ENCODE measurements at regions of chr4 and their contacts with region 1.

Region 1: DNA sequence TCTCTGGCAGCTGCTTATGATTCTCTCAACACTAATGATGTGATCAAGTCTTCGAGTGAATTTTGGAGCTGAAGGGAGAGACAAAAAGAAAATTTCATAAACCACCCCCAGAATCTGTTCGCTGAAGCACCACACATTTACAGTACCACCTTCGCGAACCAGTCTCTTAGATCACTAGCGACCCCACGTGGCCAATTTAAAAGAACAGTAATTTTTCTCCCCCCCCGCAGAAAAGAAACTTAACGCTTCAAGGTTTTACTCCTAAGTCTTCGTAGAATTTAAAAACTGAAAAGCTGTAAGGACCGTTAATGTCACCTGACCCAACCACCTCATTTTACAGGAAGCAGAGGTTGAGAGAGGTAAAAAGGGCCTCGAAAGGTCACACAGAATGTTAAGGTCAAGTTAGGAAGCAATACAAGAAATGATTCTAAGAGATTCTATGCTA is 187.5 kb downstream of the QDPR start:
- DNase-seq: peak in 7 of 9 donors; percentile 16 to 43 (median 31)
- ATAC-seq: peak; percentile 56
- H3K4me3 ChIP-seq: no peak overlapping the region
- H3K4me3 Mint-ChIP-seq: peak overlapping the region; percentile 22 to 77 (median 57)
- H3K27ac ChIP-seq: no peak overlapping the region
- H3K27ac Mint-ChIP-seq: peak overlapping the region in 5 of 9 donors; percentile 17 to 67 (median 42)
- H3K4me1 ChIP-seq: peaks cover 0 to 6% of the 10 kb centered on the region in 2 donors
- H3K4me1 Mint-ChIP-seq: peaks cover 8 to 14% (median 10%) of the 10 kb centered on the region in 7 donors
- H3K27me3 ChIP-seq: no peaks in the 10 kb centered on the region
- H3K27me3 Mint-ChIP-seq: peaks cover 0 to 4% (median 0%) of the 10 kb centered on the region in 5 donors

Region 2: GRCh38 chr4:16794816-16795445 is 529.5 kb before region 1 on chr4:
- CTCF ChIA-PET with region 1: no interaction called
- POLR2A ChIA-PET with region 1: no interaction called
- intact Hi-C with region 1: loop called (anchors 2 kb)
- DNase-seq: peak in 5 of 9 donors; percentile 3 to 32 (median 16)
- ATAC-seq: no peak
- H3K4me3 ChIP-seq: no peak overlapping the region
- H3K4me3 Mint-ChIP-seq: no peak overlapping the region
- H3K27ac ChIP-seq: no peak overlapping the region
- H3K27ac Mint-ChIP-seq: no peak overlapping the region
- H3K4me1 ChIP-seq: no peaks in the 10 kb centered on the region
- H3K4me1 Mint-ChIP-seq: peaks cover 0 to 4% (median 0%) of the 10 kb centered on the region in 7 donors
- H3K27me3 ChIP-seq: no peaks in the 10 kb centered on the region
- H3K27me3 Mint-ChIP-seq: peaks cover 0 to 9% (median 5%) of the 10 kb centered on the region in 5 donors

Region 3: DNA sequence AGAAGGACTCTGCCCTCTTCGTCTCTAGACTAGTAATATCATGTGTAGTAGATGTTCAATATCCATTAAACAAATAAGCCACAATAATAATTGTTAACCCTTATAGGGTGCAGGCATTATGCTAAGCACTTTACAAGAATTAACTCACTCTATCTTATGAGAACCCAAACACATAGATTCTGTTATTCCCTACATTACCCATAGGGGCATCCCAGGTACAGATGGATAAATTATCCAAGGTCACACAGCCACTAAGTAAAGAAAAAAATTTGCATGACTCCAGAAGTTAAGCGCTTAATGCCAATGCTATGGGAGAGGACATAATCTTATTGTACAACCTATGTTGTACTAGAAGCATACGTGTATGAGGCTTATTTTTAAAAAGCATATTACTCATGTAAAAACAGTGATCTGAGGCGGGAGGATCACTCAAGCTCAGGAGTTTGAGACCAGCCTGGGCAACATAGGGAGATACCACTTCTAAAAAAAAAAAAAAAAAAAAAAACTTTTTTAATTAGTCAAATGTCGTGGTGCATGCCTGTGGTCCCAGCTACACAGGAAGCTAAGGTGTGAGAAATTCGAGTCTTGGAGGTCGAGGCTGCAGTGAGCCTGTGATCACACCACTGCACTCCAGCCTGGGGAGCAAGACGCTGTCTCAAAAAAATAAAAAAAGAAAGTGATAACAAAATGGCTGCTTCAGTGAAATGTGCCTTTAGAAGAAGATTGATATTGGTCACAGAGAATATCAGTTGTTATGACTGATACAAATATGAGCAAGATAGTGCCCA is 439.5 kb before region 1 on chr4:
- CTCF ChIA-PET with region 1: no interaction called
- POLR2A ChIA-PET with region 1: no interaction called
- intact Hi-C with region 1: no loop called
- DNase-seq: no peak
- ATAC-seq: peak; percentile 51
- H3K4me3 ChIP-seq: no peak overlapping the region
- H3K4me3 Mint-ChIP-seq: no peak overlapping the region
- H3K27ac ChIP-seq: no peak overlapping the region
- H3K27ac Mint-ChIP-seq: no peak overlapping the region
- H3K4me1 ChIP-seq: peaks cover 4 to 16% of the 10 kb centered on the region in 2 donors
- H3K4me1 Mint-ChIP-seq: peaks cover 2 to 24% (median 11%) of the 10 kb centered on the region in 7 donors
- H3K27me3 ChIP-seq: no peaks in the 10 kb centered on the region
- H3K27me3 Mint-ChIP-seq: no peaks in the 10 kb centered on the region

Region 4: DNA sequence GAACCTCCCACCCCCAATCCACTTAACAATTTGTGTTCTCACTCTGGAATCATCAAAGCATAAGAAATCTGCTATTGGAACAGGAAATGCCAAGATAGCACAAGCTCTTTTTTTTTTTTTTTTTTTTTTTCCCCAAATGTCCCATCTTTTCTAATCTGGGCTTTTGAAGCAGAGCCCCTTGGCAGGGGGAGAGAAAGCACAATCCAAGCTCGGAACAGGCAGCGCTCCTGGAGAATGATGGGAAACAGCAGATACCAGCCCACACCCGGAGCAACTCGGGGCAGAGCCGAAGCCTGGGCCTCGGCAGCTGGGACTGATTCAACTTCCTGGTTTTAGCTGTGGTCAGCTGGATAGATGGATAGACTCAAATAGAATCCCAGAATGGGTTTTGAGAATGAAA is 47.6 kb before region 1 on chr4:
- CTCF ChIA-PET with region 1: no interaction called
- POLR2A ChIA-PET with region 1: no interaction called
- intact Hi-C with region 1: no loop called
- DNase-seq: no peak
- ATAC-seq: no peak
- H3K4me3 ChIP-seq: no peak overlapping the region
- H3K4me3 Mint-ChIP-seq: no peak overlapping the region
- H3K27ac ChIP-seq: no peak overlapping the region
- H3K27ac Mint-ChIP-seq: no peak overlapping the region
- H3K4me1 ChIP-seq: no peaks in the 10 kb centered on the region
- H3K4me1 Mint-ChIP-seq: no peaks in the 10 kb centered on the region
- H3K27me3 ChIP-seq: no peaks in the 10 kb centered on the region
- H3K27me3 Mint-ChIP-seq: peaks cover 0 to 4% (median 0%) of the 10 kb centered on the region in 5 donors

Region 5: DNA sequence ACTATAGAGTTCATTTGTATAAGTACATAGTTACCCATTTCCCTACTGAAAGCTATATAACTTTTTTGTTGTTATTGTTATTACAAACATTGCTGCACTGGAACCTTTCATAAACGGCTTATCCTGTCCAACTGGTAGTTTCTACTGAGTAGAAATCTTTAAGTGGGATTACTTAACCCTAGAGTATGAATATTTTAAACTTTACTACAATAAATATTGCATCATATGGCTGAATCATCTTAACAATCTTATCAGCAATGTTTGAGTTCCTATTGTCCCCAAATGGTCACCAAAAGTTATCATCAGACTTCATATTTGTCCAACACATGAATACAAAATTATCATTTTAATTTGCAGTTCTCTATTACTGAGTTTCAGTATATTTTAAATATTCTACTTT is 656.7 kb after region 1 on chr4:
- CTCF ChIA-PET with region 1: no interaction called
- POLR2A ChIA-PET with region 1: no interaction called
- intact Hi-C with region 1: no loop called
- DNase-seq: no peak
- ATAC-seq: no peak
- H3K4me3 ChIP-seq: no peak overlapping the region
- H3K4me3 Mint-ChIP-seq: no peak overlapping the region
- H3K27ac ChIP-seq: no peak overlapping the region
- H3K27ac Mint-ChIP-seq: no peak overlapping the region
- H3K4me1 ChIP-seq: no peaks in the 10 kb centered on the region
- H3K4me1 Mint-ChIP-seq: peaks cover 0 to 1% (median 0%) of the 10 kb centered on the region in 7 donors
- H3K27me3 ChIP-seq: no peaks in the 10 kb centered on the region
- H3K27me3 Mint-ChIP-seq: no peaks in the 10 kb centered on the region